GM18951 (cell line): ENCODE measurements at regions of chr12 and their contacts with region 1.

Region 1: GRCh38 chr12:4287325-4288211 is 14.0 kb downstream of the CCND2 start:
- POLR2A ChIP-seq: peak; percentile 32

Region 2: GRCh38 chr12:3896801-3897331 is 390.7 kb before region 1 on chr12:
- in situ Hi-C with region 1: loop called (anchors 10 kb)
- POLR2A ChIP-seq: no peak

Region 3: GRCh38 chr12:3990501-3991280 is 296.9 kb before region 1 on chr12:
- in situ Hi-C with region 1: loop called (anchors 5 kb)
- POLR2A ChIP-seq: no peak

Region 4: GRCh38 chr12:4526923-4527546 is 239.5 kb after region 1 on chr12:
- in situ Hi-C with region 1: no loop called
- POLR2A ChIP-seq: no peak